BJ (cell line): ENCODE measurements at regions of chr11 and their contacts with region 1.

Region 1: GRCh38 chr11:27485930-27486773 is 13.6 kb upstream of the LGR4 start:
- DNase-seq: no peak
- H3K4me3 ChIP-seq: no peak overlapping the region
- H3K27me3 ChIP-seq: no peaks in the 10 kb centered on the region
- CTCF ChIP-seq: peak; percentile 84

Region 2: GRCh38 chr11:27183672-27184457 is 302.3 kb before region 1 on chr11:
- CTCF ChIA-PET with region 1: interaction called, 92 read pairs
- POLR2A ChIA-PET with region 1: no interaction called
- DNase-seq: no peak
- H3K4me3 ChIP-seq: no peak overlapping the region
- H3K27me3 ChIP-seq: no peaks in the 10 kb centered on the region
- CTCF ChIP-seq: peak; percentile 67

Region 3: GRCh38 chr11:27201454-27202236 is 284.5 kb before region 1 on chr11:
- CTCF ChIA-PET with region 1: interaction called, 14 read pairs
- POLR2A ChIA-PET with region 1: no interaction called
- DNase-seq: peak; percentile 85
- H3K4me3 ChIP-seq: no peak overlapping the region
- H3K27me3 ChIP-seq: no peaks in the 10 kb centered on the region
- CTCF ChIP-seq: no peak

Region 4: GRCh38 chr11:27296497-27296896 is 189.7 kb before region 1 on chr11:
- CTCF ChIA-PET with region 1: interaction called, 16 read pairs
- POLR2A ChIA-PET with region 1: no interaction called
- DNase-seq: no peak
- H3K4me3 ChIP-seq: no peak overlapping the region
- H3K27me3 ChIP-seq: no peaks in the 10 kb centered on the region
- CTCF ChIP-seq: peak; percentile 74

Region 5: DNA sequence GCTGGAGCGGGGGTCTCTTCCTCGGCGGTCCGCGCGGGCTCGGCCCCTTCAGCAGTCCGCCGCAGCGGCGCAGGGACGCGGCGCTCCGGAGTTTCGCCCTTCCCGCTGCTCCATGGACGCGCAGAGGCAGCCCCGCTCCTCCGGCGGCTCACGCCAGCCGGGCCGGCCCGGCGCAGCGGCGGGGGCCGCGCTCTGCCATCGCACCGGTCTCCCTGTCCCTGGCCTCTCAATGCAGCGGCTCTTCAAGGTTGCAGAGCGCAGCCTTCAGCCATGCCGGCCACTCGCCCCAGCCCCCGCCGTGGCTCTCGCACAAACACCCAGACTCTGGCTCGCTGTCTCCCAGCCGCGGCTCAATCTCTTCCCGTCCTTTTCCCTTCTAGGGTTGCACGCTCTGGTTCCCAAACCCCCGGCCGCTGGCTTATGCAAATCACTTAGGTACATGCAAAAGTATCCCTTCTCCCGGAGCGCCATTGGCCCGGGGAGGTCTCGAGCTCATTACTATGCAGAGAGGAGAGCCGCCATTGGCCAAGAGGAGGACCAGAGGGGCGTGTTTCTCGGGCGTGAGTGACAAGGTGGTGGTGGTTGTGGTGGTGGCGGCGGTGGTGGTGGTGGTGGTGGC is 13.6 kb before region 1 on chr11 and contains the start of gene LGR4:
- CTCF ChIA-PET with region 1: interaction called, 24 read pairs
- POLR2A ChIA-PET with region 1: no interaction called
- DNase-seq: peak; percentile 73
- H3K4me3 ChIP-seq: peak within 1 kb of the TSS; percentile 78
- H3K27me3 ChIP-seq: no peaks in the 10 kb centered on the region
- CTCF ChIP-seq: no peak
- polyA plus RNA-seq, gene LGR4: 7.6 and 12.5 TPM in 2 replicates

Region 6: DNA sequence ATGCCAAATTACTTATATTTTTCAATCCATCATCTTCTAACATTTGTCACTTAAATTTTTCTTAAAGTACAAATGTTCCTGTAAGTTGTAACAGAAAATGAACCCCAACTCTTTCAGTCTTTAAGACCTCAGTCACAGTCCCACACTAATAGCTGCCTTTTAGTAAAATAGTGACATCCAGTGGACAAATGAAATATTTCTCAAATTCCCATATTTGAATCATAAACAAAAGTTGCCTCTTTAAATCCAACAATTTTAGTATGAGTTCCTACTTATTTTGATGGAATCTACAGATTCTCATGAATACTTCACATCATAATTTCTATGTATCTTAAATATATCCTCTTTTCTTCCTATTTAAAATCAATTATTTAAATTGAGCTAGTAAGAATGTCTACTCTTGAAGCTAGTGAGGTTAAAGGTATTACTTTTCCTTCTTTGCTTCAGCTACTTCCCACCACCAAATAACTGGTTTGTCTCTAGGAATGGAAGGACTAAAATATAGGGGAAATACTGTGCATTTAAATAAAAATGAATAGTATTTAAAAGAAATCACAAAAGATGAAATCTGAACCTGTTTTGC is 11.2 kb after region 1 on chr11:
- CTCF ChIA-PET with region 1: interaction called, 30 read pairs
- POLR2A ChIA-PET with region 1: no interaction called
- DNase-seq: no peak
- H3K4me3 ChIP-seq: no peak overlapping the region
- H3K27me3 ChIP-seq: no peaks in the 10 kb centered on the region
- CTCF ChIP-seq: peak; percentile 52

Region 7: GRCh38 chr11:27672836-27673464 is 186.8 kb after region 1 on chr11:
- CTCF ChIA-PET with region 1: no interaction called
- POLR2A ChIA-PET with region 1: no interaction called
- DNase-seq: no peak
- H3K4me3 ChIP-seq: no peak overlapping the region
- H3K27me3 ChIP-seq: no peaks in the 10 kb centered on the region
- CTCF ChIP-seq: no peak